Caco-2 (cell line): ENCODE measurements at regions of chr6 and their contacts with region 1.

Region 1: DNA sequence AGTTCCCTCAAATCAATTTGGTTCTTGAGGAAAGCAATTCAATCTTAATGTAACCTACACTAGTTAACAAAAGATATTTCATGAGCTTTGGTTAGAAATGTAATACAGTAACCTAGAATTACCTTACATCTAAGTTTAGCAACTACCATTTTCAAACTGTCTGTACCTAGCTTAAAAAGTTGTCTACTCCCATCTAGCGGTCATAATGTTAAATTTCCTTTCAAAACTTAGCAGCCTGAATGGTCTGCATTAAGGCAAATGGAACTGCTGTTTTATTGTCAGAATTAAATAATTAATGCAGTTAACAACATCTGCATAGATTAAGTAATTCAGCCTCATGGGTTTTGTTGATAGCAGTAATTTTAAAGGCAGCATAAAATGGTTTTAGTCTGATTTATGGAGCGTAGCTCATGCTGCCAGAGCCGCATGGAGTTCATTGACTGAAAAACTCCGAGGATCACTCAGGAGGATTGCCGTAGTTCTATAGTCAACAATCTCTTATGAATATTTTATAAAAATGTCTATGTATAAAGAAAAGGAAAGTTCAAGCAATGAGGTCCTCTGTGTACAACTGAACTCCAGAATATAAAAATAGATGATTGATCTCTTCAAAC is 485.4 kb upstream of the MANEA start:
- DNase-seq: peak in 1 of 2 experiments; percentile 26
- H3K4me3 ChIP-seq: no peak overlapping the region
- H3K4me3 Mint-ChIP-seq: no peak overlapping the region
- H3K27ac Mint-ChIP-seq: no peak overlapping the region
- H3K4me1 ChIP-seq: peaks cover 4% of the 10 kb centered on the region; the same call in 1 of the 2 replicates
- H3K4me1 Mint-ChIP-seq: peaks cover 15% of the 10 kb centered on the region
- H3K27me3 ChIP-seq: no peaks in the 10 kb centered on the region
- H3K27me3 Mint-ChIP-seq: no peaks in the 10 kb centered on the region
- CTCF ChIP-seq: peak; percentile 47 to 57

Region 2: GRCh38 chr6:94323853-94324252 is 768.1 kb before region 1 on chr6:
- CTCF ChIA-PET with region 1: interaction called, 4 read pairs
- POLR2A ChIA-PET with region 1: no interaction called
- intact Hi-C with region 1: loop called (anchors 1 kb)
- DNase-seq: peak; percentile 18 to 39
- H3K4me3 ChIP-seq: no peak overlapping the region
- H3K4me3 Mint-ChIP-seq: no peak overlapping the region
- H3K27ac Mint-ChIP-seq: no peak overlapping the region
- H3K4me1 ChIP-seq: no peaks in the 10 kb centered on the region
- H3K4me1 Mint-ChIP-seq: no peaks in the 10 kb centered on the region
- H3K27me3 ChIP-seq: no peaks in the 10 kb centered on the region
- H3K27me3 Mint-ChIP-seq: no peaks in the 10 kb centered on the region
- CTCF ChIP-seq: peak; percentile 11 to 25

Region 3: GRCh38 chr6:94636780-94637385 is 455.0 kb before region 1 on chr6:
- CTCF ChIA-PET with region 1: no interaction called
- POLR2A ChIA-PET with region 1: no interaction called
- intact Hi-C with region 1: loop called (anchors 1 kb)
- DNase-seq: peak in 1 of 2 experiments; percentile 9
- H3K4me3 ChIP-seq: no peak overlapping the region
- H3K4me3 Mint-ChIP-seq: no peak overlapping the region
- H3K27ac Mint-ChIP-seq: no peak overlapping the region
- H3K4me1 ChIP-seq: no peaks in the 10 kb centered on the region
- H3K4me1 Mint-ChIP-seq: no peaks in the 10 kb centered on the region
- H3K27me3 ChIP-seq: no peaks in the 10 kb centered on the region
- H3K27me3 Mint-ChIP-seq: no peaks in the 10 kb centered on the region
- CTCF ChIP-seq: peak in 1 of 2 experiments; percentile 27

Region 4: DNA sequence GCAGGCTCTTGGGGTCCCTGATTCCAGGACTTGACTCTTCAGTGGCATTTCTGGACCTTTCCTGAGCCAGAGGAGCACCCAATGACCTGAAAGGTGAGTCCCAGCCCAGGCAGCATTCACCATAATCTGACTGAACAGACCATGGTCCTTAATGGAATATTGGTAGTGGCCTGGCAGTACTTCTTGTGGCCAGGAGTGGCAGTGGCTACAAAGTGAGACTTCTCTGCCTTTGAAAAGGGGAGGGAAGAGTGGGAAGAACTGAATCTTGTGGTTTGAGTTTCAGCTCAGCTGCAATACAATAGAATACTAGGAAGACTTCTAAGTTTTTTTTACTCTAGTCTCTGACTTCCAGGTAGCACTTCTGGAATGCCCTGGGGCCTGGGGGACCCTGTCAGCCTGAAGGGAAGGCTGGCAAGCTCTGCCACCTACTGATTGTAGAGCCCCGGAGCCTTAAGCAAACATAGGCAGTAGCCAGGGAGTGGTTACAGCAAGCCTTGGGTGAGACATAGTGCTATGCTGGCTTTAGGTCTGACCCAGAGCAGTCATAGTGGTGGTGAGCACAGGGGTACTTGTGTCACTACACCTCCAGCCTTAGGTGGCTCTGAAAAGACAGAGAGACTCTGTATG is 188.8 kb before region 1 on chr6:
- CTCF ChIA-PET with region 1: no interaction called
- POLR2A ChIA-PET with region 1: no interaction called
- intact Hi-C with region 1: no loop called
- DNase-seq: peak in 1 of 2 experiments; percentile 5
- H3K4me3 ChIP-seq: no peak overlapping the region
- H3K4me3 Mint-ChIP-seq: no peak overlapping the region
- H3K27ac Mint-ChIP-seq: no peak overlapping the region
- H3K4me1 ChIP-seq: no peaks in the 10 kb centered on the region
- H3K4me1 Mint-ChIP-seq: no peaks in the 10 kb centered on the region
- H3K27me3 ChIP-seq: no peaks in the 10 kb centered on the region
- H3K27me3 Mint-ChIP-seq: no peaks in the 10 kb centered on the region
- CTCF ChIP-seq: no peak

Region 5: DNA sequence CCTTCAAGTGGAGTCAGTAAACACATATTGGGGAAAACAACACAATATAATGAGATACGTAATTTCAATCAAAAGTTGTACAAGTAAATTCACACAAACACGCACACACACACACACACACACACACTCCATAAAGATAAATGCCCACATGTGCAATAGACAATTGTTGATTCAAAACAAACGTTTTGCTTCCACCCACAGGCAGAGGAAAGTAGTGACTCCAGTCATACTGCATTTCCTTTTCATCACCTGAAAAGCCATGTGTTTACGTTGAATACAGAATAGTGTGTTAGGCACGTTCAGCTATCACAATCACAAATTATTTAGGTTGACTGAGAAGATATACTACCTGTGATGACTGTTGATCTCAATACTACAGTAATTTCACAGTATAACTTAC is 41.6 kb after region 1 on chr6:
- CTCF ChIA-PET with region 1: interaction called, 6 read pairs
- POLR2A ChIA-PET with region 1: no interaction called
- intact Hi-C with region 1: loop called (anchors 2 kb)
- DNase-seq: peak in 1 of 2 experiments; percentile 35
- H3K4me3 ChIP-seq: no peak overlapping the region
- H3K4me3 Mint-ChIP-seq: no peak overlapping the region
- H3K27ac Mint-ChIP-seq: no peak overlapping the region
- H3K4me1 ChIP-seq: no peaks in the 10 kb centered on the region
- H3K4me1 Mint-ChIP-seq: no peaks in the 10 kb centered on the region
- H3K27me3 ChIP-seq: no peaks in the 10 kb centered on the region
- H3K27me3 Mint-ChIP-seq: no peaks in the 10 kb centered on the region
- CTCF ChIP-seq: peak; percentile 11 to 26